ENCODE measurements at regions of chr9 and their contacts with region 1.

Region 1: GRCh38 chr9:89000973-89001916 is 10.0 kb downstream of the S1PR3 start:
- DNase-seq: peak; percentile 78
- H3K4me3 ChIP-seq: no peak overlapping the region
- H3K27ac ChIP-seq: no peak overlapping the region
- H3K4me1 ChIP-seq: no peaks in the 10 kb centered on the region
- CTCF ChIP-seq: peak; percentile 86

Region 2: DNA sequence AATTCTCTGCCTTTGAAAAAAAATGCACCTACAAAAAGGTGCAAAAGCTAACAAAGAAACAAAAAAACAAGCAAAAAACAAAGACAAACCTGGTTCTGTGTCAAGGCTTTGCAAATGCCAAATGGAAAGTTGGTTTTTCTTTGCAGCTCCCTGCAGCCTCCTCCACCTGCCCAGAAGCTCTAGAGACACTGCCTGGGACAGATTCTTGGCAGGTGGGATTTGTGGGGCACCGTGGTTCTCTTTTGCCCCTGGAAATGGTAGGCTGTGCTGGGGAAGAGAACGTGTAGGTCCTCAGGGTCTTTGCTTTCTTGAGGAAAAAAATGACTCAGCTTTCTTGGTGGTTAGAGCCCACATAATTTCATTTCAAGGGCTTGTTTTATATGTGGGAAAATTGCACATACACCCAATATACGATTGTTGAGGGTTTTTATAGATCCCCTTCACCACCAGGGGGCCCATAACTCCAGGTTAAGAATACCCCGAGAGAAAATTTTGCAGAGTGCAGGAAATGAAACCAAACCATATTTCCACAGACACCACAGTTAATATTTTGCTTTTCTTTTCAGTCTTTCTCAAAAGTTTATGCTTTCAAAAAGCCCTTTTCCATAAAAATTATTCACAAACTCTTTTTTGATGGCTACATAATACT is 407.6 kb before region 1 on chr9:
- CTCF ChIA-PET with region 1: interaction called, 6 read pairs
- POLR2A ChIA-PET with region 1: no interaction called
- intact Hi-C with region 1: loop called (anchors 1 kb)
- DNase-seq: peak; percentile 71
- H3K4me3 ChIP-seq: no peak overlapping the region
- H3K27ac ChIP-seq: no peak overlapping the region
- H3K4me1 ChIP-seq: no peaks in the 10 kb centered on the region
- CTCF ChIP-seq: peak; percentile 86

Region 3: DNA sequence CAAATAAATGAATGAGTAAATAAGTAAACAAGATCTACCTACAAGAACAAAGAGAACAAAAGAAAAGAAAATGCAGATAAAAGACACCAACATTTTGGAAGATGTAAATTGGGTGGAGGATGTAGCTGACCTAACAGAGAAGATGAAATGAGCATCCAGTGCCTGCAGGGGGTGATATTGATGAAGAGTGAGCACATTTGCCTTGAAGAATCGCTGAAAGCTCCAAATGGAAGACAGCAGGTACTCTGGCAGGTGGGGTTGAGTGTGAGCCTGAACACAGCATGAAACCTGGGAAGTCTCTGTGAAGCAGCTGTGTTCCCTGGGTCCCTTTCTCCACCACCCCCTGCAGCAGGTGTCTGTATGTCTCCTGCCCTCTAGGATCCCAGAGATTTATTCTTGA is 340.6 kb before region 1 on chr9:
- CTCF ChIA-PET with region 1: no interaction called
- POLR2A ChIA-PET with region 1: no interaction called
- intact Hi-C with region 1: loop called (anchors 2 kb)
- DNase-seq: peak; percentile 9
- H3K4me3 ChIP-seq: no peak overlapping the region
- H3K27ac ChIP-seq: no peak overlapping the region
- H3K4me1 ChIP-seq: no peaks in the 10 kb centered on the region
- CTCF ChIP-seq: peak; percentile 67

Region 4: GRCh38 chr9:88722753-88723152 is 278.5 kb before region 1 on chr9:
- CTCF ChIA-PET with region 1: no interaction called
- POLR2A ChIA-PET with region 1: no interaction called
- intact Hi-C with region 1: loop called (anchors 5 kb)
- DNase-seq: peak; percentile 10
- H3K4me3 ChIP-seq: no peak overlapping the region
- H3K27ac ChIP-seq: no peak overlapping the region
- H3K4me1 ChIP-seq: no peaks in the 10 kb centered on the region
- CTCF ChIP-seq: peak; percentile 62

Region 5: DNA sequence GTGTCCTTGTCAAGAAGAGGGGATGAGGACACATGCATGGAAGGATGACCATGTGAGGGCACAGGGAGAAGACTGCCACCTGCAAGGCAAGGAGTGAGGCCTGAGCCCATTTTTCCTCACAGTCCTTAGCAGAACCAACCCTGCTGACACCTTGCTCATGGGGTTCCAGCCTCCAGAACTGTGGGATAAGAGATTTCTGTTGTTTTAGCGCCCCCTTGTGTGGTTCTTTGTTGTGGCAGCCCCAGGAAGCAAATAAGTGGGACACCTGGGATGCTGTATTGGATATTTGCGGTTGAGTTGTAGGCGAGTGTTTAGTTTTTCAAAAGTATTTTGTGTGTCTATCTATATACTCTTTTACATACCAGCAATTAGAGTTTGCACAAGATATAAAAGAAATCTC is 259.9 kb before region 1 on chr9:
- CTCF ChIA-PET with region 1: no interaction called
- POLR2A ChIA-PET with region 1: no interaction called
- intact Hi-C with region 1: loop called (anchors 5 kb)
- DNase-seq: peak; percentile 18
- H3K4me3 ChIP-seq: no peak overlapping the region
- H3K27ac ChIP-seq: no peak overlapping the region
- H3K4me1 ChIP-seq: no peaks in the 10 kb centered on the region
- CTCF ChIP-seq: peak; percentile 79

Region 6: DNA sequence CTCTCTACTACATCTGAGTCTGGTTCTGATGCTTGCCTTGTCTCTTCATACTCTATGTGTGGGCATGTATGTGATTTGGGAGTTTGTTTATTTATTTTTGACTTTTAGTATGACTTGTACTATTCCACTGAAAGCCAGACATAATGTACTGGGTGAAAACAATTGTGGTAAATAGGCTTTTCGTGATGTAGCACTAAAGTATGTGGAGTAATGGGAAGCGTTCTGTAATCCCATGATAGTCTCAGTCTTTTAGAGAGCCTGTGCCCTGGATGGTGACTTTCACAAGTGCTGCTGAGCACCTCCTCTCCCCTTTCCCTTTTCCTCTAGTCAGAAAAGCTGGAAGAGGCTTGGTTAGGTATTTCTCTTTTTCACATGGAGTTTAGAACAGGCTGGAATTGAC is 95.7 kb before region 1 on chr9:
- CTCF ChIA-PET with region 1: no interaction called
- POLR2A ChIA-PET with region 1: no interaction called
- intact Hi-C with region 1: no loop called
- DNase-seq: no peak
- H3K4me3 ChIP-seq: no peak overlapping the region
- H3K27ac ChIP-seq: no peak overlapping the region
- H3K4me1 ChIP-seq: no peaks in the 10 kb centered on the region
- CTCF ChIP-seq: no peak

Region 7: GRCh38 chr9:89149726-89150125 is 148.5 kb after region 1 on chr9:
- CTCF ChIA-PET with region 1: no interaction called
- POLR2A ChIA-PET with region 1: no interaction called
- intact Hi-C with region 1: no loop called
- DNase-seq: no peak
- H3K4me3 ChIP-seq: no peak overlapping the region
- H3K27ac ChIP-seq: no peak overlapping the region
- H3K4me1 ChIP-seq: no peaks in the 10 kb centered on the region
- CTCF ChIP-seq: no peak

Measured in OCI-LY7 (cell line).